ENCODE measurements at regions of chr14 and their contacts with region 1.

Region 1: GRCh38 chr14:92135267-92135666 is 13.5 kb downstream of the CPSF2 start:
- DNase-seq: no peak
- ATAC-seq: 0 out of 3 replicates have a peak, but pooled peaks have one; percentile 35
- H3K4me3 ChIP-seq: no peak overlapping the region
- H3K27ac ChIP-seq: no peak overlapping the region
- H3K4me1 ChIP-seq: no peaks in the 10 kb centered on the region
- H3K27me3 ChIP-seq: no peaks in the 10 kb centered on the region
- CTCF ChIP-seq: peak; percentile 30 to 59 (median 36); a peak in 3 of 6 replicates
- EP300 ChIP-seq: no peak
- POLR2A ChIP-seq: no peak
- RAD21 ChIP-seq: peak; percentile 54

Region 2: GRCh38 chr14:91580876-91581577 is 554.2 kb before region 1 on chr14:
- CTCF ChIA-PET with region 1: no interaction called
- POLR2A ChIA-PET with region 1: no interaction called
- RAD21 ChIA-PET with region 1: no interaction called
- SMC1A ChIA-PET with region 1: no interaction called
- in situ Hi-C with region 1: no loop called
- intact Hi-C with region 1: no loop called
- DNase-seq: no peak
- ATAC-seq: no peak
- H3K4me3 ChIP-seq: no peak overlapping the region
- H3K27ac ChIP-seq: no peak overlapping the region
- H3K4me1 ChIP-seq: no peaks in the 10 kb centered on the region
- H3K27me3 ChIP-seq: no peaks in the 10 kb centered on the region; a peak in 1 of 4 replicates
- CTCF ChIP-seq: no peak
- EP300 ChIP-seq: no peak
- POLR2A ChIP-seq: no peak
- RAD21 ChIP-seq: no peak

Region 3: GRCh38 chr14:92121670-92122350 is 13.5 kb before region 1 on chr14 and contains the starts of genes CPSF2 and NDUFB1:
- CTCF ChIA-PET with region 1: interaction called, 11 read pairs
- POLR2A ChIA-PET with region 1: interaction called, 4 read pairs
- RAD21 ChIA-PET with region 1: interaction called, 9 read pairs
- SMC1A ChIA-PET with region 1: interaction called, 11 read pairs
- in situ Hi-C with region 1: no loop called
- intact Hi-C with region 1: no loop called
- DNase-seq: peak; percentile 45
- ATAC-seq: peak; percentile 93
- H3K4me3 ChIP-seq: peak within 1 kb of the TSS; percentile 96
- H3K27ac ChIP-seq: peak within 1 kb of the TSS; percentile 95
- H3K4me1 ChIP-seq: peaks cover 6% of the 10 kb centered on the region; the same call in 1 of the 2 replicates
- H3K27me3 ChIP-seq: no peaks in the 10 kb centered on the region
- CTCF ChIP-seq: no peak
- EP300 ChIP-seq: no peak
- POLR2A ChIP-seq: peak; percentile 98
- RAD21 ChIP-seq: no peak
- polyA plus RNA-seq, gene CPSF2: 18.2 to 20.1 TPM
- polyA plus RNA-seq, gene NDUFB1: 626 to 780 TPM

Region 4: DNA sequence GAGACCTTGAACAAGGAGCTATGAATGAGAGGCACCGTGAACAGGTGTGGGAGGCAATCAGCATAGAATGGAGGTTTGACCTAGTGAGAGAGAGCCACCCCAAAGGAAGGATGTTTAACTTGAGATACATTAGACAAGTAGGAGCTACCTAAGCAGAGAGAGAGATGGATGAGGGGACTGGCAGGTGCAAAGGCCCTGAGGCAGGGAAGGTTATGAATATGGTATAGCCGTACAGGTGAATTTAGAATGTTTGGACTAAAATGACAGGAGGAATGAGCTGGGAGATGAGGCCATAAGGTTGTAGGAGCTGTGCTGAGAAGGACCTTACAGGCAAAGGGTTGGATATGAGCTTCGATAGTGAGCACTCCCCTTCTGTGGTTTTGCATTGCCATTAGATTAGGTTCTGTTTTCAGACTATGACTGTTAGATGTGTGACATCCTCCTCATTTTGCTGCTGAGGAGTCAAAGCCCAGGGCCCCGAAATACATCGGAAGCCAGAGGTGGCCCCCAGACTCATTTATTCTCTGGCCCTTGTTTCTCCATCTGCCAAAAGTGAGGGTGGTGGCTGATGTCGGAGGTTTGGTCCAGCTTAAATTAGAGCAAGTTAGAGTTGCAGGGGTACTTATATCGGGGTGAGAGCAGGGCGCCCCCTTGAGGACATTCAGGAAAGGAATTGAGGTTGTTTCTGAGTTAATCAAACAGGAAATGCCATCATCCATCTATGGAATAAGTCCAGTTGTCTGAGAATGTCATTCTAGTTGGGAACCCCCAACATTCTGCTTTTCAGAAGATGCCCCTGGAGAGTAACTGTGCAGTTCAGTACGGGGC is 217.1 kb after region 1 on chr14:
- CTCF ChIA-PET with region 1: interaction called, 77 read pairs
- POLR2A ChIA-PET with region 1: interaction called, 8 read pairs
- RAD21 ChIA-PET with region 1: interaction called, 19 read pairs
- SMC1A ChIA-PET with region 1: interaction called, 27 read pairs
- in situ Hi-C with region 1: no loop called
- intact Hi-C with region 1: loop called (anchors 5 kb)
- DNase-seq: no peak
- ATAC-seq: peak; percentile 77
- H3K4me3 ChIP-seq: no peak overlapping the region
- H3K27ac ChIP-seq: no peak overlapping the region
- H3K4me1 ChIP-seq: no peaks in the 10 kb centered on the region; the same call in 1 of the 2 replicates
- H3K27me3 ChIP-seq: peaks cover 0 to 3% of the 10 kb centered on the region in 2 experiments; a peak in 1 of 4 replicates
- CTCF ChIP-seq: peak; percentile 49 to 58 (median 55); a peak in 5 of 6 replicates
- EP300 ChIP-seq: no peak
- POLR2A ChIP-seq: no peak
- RAD21 ChIP-seq: peak; percentile 64

Region 5: DNA sequence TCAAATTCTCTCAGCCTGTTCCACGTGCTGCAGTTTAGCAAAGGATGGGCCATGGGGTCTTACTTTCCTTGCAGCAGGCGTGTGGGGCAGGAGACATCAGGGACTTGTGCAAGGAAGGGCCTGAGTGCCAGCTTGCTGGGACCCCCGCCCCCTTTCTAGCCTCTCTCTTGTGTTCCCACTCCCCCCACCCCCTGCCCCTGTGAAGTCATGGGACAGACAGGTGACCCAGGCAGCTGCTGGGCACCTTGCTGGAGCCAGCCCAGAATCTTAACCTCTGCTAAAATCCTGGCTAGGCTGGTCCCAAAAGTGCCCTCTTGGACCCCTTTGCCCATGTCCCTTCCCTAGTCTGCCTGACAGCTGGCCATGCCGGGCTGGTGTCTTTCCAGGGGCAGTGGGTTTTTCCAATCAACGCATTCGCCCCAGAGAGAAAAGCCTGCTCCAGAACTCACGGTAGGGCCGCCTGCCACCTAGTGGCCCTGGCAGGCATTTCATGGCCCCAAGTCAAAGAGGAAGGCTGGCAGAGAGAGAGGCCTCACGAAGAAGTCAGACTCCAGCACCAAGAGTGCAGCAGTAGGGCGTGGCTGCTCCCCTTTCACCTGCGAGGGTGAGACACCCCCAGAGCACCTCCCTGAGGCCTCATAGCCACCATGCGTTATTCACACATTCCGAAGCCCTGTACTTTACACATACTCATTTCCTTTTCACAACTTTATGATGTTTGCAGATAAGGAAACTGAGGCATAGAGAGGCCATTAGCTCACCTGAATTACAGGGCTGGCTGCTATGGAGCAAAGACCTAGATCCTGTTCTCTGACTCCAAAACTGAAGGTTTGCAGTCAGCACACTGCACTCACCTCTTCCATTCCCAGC is 545.7 kb after region 1 on chr14:
- CTCF ChIA-PET with region 1: interaction called, 6 read pairs
- POLR2A ChIA-PET with region 1: no interaction called
- RAD21 ChIA-PET with region 1: no interaction called
- SMC1A ChIA-PET with region 1: no interaction called
- in situ Hi-C with region 1: loop called (anchors 25 kb)
- intact Hi-C with region 1: loop called (anchors 5 kb)
- DNase-seq: no peak
- ATAC-seq: peak; percentile 52
- H3K4me3 ChIP-seq: no peak overlapping the region
- H3K27ac ChIP-seq: no peak overlapping the region
- H3K4me1 ChIP-seq: peaks cover 28% of the 10 kb centered on the region
- H3K27me3 ChIP-seq: no peaks in the 10 kb centered on the region
- CTCF ChIP-seq: peak; percentile 84 to 91 (median 90)
- EP300 ChIP-seq: no peak
- POLR2A ChIP-seq: no peak
- RAD21 ChIP-seq: peak; percentile 97